Left ventricle myocardium superior (tissue), 1 donor: ENCODE measurements at regions of chr3 and their contacts with region 1.

Region 1: DNA sequence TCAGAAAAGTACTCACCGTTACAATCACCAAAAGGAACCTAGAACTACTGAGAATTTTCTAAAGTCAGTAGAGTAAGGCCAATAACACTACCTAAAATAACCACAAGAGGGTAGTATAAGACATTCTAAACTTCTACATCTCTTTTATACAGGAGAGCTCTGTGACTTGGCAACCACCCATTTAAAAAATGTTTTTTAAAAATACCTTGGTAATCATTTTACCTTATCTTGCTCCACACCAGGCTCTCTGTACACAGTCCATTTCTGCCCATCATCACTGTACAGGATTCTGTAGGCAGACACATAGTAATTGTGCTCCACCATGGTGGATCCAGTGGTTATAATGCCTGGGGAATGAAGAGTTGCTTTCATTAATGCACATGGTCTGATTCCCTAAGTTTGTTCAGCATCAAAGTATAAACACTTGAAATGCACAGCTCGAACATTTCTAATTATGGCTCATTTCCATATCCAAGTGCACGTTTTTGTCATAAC is 54.5 kb downstream of the ST3GAL6 start:
- DNase-seq: no peak
- ATAC-seq: peak; percentile 84

Region 2: DNA sequence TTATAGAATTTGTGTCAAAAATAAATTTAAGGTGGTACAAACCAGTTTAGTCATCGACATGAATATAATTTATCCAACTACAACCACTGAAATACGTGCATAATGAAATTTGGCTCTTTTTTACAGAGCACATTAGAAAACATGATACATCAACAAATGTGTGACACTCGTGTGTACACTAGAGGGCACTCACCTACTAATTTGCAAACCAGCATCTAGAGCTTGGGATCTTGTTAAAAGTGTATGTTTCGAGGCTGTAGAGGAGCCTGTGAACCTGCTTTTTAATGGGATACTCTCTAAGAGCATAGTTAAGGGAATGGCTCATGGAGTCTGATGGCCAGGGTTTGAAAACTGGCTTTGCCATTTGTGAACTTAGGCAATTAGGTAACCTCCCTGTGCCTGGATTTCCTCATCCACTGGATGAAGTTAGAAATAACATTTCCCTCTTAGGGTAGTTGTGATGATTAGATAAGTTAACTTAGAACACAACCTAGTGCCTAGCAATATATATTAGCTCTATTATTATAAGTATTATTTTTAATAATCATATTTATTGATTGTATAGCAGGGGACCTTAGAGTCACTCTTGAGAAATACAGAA is 215.4 kb before region 1 on chr3:
- intact Hi-C with region 1: loop called (anchors 2 kb)
- DNase-seq: no peak
- ATAC-seq: peak; percentile 80

Region 3: GRCh38 chr3:98655666-98656065 is 161.9 kb before region 1 on chr3:
- intact Hi-C with region 1: no loop called
- DNase-seq: no peak
- ATAC-seq: peak; percentile 56

Region 4: GRCh38 chr3:98994128-98994762 is 176.7 kb after region 1 on chr3:
- intact Hi-C with region 1: loop called (anchors 1 kb)
- DNase-seq: no peak
- ATAC-seq: no peak

Region 5: DNA sequence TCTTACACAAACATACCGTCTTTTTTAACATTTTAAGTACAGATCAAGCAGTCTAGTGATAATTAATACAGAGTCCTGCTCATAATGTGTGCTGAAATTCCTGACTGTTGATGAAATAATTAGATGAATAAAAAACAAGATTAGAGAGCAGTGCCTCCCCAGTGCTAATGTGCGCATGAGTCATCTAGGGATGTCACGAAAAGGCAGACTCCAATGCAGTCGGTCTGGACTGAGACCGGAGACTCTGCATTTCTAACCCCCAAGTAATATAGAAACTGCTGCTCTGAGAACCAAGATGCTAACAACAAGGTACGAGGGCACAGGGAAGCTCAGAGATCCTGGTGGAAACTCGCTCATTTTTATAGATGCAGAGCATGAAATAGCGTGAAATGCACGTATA is 882.2 kb after region 1 on chr3:
- intact Hi-C with region 1: loop called (anchors 10 kb)
- DNase-seq: no peak
- ATAC-seq: peak; percentile 70